ENCODE measurements at regions of chr4 and their contacts with region 1.

Region 1: DNA sequence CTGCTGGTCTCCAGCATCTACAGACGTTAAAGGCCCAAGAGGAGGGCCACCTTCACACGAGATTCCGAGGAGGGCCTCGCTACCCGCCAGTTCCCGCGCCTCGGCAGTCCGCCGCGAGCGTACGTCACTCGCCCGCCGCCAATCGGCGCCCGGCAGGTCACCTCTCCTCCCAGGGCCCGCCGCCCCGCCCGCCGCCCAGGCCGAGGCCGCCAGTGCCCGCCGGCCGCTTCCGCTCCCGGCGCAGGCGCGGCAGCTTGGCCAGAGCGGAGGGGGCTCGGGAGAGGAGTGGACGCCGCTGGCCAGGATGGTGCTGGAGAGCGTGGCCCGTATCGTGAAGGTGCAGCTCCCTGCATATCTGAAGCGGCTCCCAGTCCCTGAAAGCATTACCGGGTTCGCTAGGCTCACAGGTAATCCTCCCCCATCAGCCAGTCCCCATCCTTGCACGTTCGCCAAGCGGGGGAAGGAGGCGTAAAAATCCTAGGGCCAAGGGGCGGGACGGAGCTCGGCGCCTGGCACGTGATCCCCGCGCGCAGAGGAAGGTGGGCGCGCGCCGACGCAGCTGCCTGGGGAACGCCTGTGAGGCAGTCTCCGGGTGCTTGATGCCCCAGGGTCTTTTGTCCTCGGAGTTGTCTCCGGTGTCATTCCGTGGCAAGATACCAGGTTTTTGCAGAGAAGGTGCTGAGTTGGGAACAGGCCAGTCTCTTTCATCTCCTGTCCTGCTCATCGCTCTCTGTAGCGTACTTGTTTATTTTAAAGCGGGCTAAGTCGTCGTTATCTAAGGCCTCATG is at the start of gene CISD2:
- DNase-seq: peak; percentile 84 to 85
- ATAC-seq: peak; percentile 93 to 95
- H3K4me3 ChIP-seq: peak within 1 kb of the TSS; percentile 75 to 86 (median 76)
- H3K27ac ChIP-seq: peak within 1 kb of the TSS; percentile 90 to 98 (median 92)
- H3K4me1 ChIP-seq: peaks cover 10 to 15% of the 10 kb centered on the region in 2 donors
- H3K27me3 ChIP-seq: no peaks in the 10 kb centered on the region
- CTCF ChIP-seq: peak in 1 of 5 experiments; percentile 7
- POLR2A ChIP-seq: peak; percentile 62 to 80
- total RNA-seq, gene CISD2: 3.8 to 8.9 (median 5.3) TPM

Region 2: DNA sequence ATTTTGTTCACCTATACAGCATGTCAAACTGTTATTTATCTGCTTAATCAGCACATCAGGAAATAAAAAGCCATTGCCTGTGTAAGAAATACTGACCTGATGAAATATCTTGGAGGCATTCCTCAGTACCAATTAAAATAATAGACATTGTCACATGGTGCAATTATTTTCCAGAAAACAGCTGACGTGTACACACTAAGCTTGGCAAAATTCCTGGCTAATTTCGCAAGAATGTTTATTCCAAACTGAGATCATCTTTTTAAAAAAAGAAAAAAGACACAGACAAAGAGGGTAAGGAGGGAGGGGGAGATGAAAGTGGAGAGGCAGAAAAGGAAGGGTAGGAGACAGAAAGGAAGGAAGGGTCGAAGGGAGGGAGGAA is 429.8 kb before region 1 on chr4:
- in situ Hi-C with region 1: no loop called
- intact Hi-C with region 1: loop called (anchors 10 kb)
- DNase-seq: peak in 1 of 2 donors; percentile 23
- ATAC-seq: peak; percentile 89 to 97
- H3K4me3 ChIP-seq: peak overlapping the region in 1 of 4 donors; percentile 18
- H3K27ac ChIP-seq: peak overlapping the region; percentile 58 to 70 (median 66)
- H3K4me1 ChIP-seq: peaks cover 15 to 18% of the 10 kb centered on the region in 2 donors
- H3K27me3 ChIP-seq: no peaks in the 10 kb centered on the region
- CTCF ChIP-seq: no peak
- POLR2A ChIP-seq: no peak

Region 3: GRCh38 chr4:102620697-102621497 is 248.1 kb before region 1 on chr4:
- in situ Hi-C with region 1: no loop called
- intact Hi-C with region 1: loop called (anchors 10 kb)
- DNase-seq: peak in 1 of 2 donors; percentile 28
- ATAC-seq: peak; percentile 97 to 100
- H3K4me3 ChIP-seq: no peak overlapping the region
- H3K27ac ChIP-seq: peak overlapping the region in 3 of 4 donors; percentile 8 to 47 (median 16)
- H3K4me1 ChIP-seq: peaks cover 0 to 4% of the 10 kb centered on the region in 2 donors
- H3K27me3 ChIP-seq: no peaks in the 10 kb centered on the region
- CTCF ChIP-seq: peak; percentile 38 to 66 (median 55)
- POLR2A ChIP-seq: no peak

Region 4: DNA sequence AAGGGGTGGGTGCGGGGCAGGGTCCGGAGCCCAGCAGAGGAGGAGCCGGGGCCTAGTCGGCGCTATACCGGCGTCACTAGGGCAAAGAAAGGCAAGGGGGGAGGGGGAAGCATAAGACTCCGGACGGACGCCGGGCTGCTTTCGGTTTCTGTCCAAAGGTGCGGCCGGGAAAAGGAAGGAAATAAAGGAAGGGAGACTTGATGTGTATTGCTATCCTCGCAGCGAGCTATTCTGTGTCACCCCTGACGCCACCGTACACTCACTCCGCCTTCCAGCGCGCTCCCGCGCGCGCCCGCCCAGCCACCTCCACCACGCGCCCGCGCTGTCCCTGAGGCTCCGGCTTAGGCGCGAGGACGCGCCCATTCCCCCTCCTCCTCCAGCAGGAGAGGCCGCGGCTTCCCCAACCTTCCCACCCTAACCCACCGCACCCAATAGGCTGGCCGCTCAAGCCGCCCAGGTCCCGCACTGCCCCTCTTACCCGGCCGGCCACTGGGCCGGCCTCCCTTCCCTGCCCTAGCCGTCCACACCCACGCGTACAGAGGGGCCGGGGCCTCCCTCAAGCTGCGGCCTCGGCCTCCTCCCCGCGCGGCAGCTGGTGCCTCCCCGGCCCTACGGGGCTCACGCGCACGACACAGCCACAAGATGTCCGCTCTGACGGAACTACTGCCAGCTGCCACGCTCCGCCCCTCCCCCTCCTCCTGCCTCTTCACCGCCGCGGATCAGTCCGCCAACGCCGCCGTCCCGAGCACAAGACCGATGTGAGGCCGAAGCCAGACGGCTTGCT is 41.9 kb before region 1 on chr4 and contains the start of gene UBE2D3:
- in situ Hi-C with region 1: loop called in 1 of 4 experiments (anchors 5 kb)
- intact Hi-C with region 1: loop called (anchors 1 kb)
- DNase-seq: peak; percentile 88 to 92
- ATAC-seq: peak; percentile 53 to 68
- H3K4me3 ChIP-seq: peak within 1 kb of the TSS; percentile 68 to 100 (median 94)
- H3K27ac ChIP-seq: peak within 1 kb of the TSS; percentile 94 to 100 (median 100)
- H3K4me1 ChIP-seq: peaks cover 31 to 40% of the 10 kb centered on the region in 2 donors
- H3K27me3 ChIP-seq: no peaks in the 10 kb centered on the region
- CTCF ChIP-seq: peak in 1 of 5 experiments; percentile 12
- POLR2A ChIP-seq: peak; percentile 81 to 87
- total RNA-seq, gene UBE2D3: 350 to 562 (median 392) TPM

Region 5: GRCh38 chr4:103002551-103002950 is 133.6 kb after region 1 on chr4:
- in situ Hi-C with region 1: no loop called
- intact Hi-C with region 1: no loop called
- DNase-seq: no peak
- ATAC-seq: no peak
- H3K4me3 ChIP-seq: no peak overlapping the region
- H3K27ac ChIP-seq: no peak overlapping the region
- H3K4me1 ChIP-seq: no peaks in the 10 kb centered on the region
- H3K27me3 ChIP-seq: no peaks in the 10 kb centered on the region
- CTCF ChIP-seq: no peak
- POLR2A ChIP-seq: no peak

Region 6: DNA sequence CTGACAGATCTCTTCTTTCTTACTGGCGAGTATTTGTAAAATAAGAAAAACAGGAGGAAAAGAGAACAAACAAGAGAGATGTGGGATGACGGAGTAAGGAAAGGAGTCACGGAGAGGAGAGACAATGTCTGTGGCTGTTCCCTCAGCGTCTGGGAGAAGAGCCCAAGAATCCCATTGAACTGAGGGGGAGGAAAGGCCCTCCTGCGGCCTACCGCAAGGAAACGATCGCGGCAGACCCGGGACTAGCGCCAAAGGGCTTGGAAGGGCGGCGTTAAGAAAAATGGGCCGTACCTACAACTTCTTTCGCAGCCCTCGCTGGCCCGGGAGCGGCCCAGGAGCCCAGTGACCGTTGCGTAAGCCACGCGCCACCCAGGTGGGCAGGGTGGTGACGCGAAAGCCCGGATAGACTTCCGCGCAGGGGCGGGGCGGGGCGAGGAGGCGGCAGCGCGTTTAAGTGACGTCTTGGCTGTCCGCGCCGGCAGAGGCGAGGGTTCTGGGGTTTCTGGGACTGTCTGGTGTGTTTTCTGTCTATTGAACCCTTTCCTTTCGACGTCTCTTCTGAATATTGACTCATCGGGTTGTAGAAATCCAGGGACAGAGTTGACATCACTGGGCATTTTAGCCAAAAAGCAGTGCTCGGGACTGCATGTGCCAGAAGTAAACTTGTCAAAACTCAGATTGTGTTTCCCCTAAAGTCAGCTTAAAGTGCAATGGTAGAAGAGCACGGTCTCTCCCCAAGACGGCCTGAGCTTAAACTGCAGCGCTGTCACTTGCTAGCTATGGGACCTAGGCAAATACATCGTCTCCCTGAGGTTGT is 150.5 kb after region 1 on chr4 and contains the start of gene SLC9B1:
- in situ Hi-C with region 1: loop called in 1 of 4 experiments (anchors 10 kb)
- intact Hi-C with region 1: loop called (anchors 2 kb)
- DNase-seq: peak; percentile 90 to 96
- ATAC-seq: peak; percentile 87 to 93
- H3K4me3 ChIP-seq: peak within 1 kb of the TSS; percentile 58 to 64 (median 62)
- H3K27ac ChIP-seq: peak within 1 kb of the TSS; percentile 90 to 96 (median 95)
- H3K4me1 ChIP-seq: peaks cover 15 to 21% of the 10 kb centered on the region in 2 donors
- H3K27me3 ChIP-seq: no peaks in the 10 kb centered on the region
- CTCF ChIP-seq: peak in 1 of 5 experiments; percentile 17
- POLR2A ChIP-seq: peak; percentile 84 to 86
- total RNA-seq, gene SLC9B1: not detected